MCF 10A (cell line): ENCODE measurements at regions of chr19 and their contacts with region 1.

Region 1: GRCh38 chr19:41883821-41884733 is 1.1 kb downstream of the ARHGEF1 start:
- DNase-seq: peak; percentile 98
- H3K4me3 Mint-ChIP-seq: peak overlapping the region; percentile 77
- H3K27ac Mint-ChIP-seq: peak overlapping the region; percentile 95
- H3K4me1 Mint-ChIP-seq: peaks cover 33% of the 10 kb centered on the region
- H3K27me3 Mint-ChIP-seq: no peaks in the 10 kb centered on the region
- CTCF ChIP-seq: no peak

Region 2: DNA sequence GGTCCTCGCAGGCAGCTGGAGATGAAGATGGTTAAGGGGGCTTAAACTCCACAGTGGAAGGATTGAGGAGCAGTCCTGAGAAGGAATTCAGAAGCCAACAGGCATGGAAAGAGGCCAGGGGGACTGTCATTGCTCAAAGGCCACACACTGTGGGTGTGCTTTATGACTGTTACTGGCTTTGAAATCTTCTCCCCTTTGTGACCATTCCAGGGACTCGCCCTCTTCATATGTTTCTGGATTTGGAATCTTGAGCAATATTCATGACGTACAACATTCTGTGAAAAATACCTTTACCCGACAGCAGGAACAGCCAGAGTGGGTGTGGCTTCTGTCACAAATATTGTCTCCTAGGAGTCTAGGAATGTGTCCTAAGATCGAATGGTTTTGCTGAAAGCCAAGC is 212.6 kb before region 1 on chr19:
- CTCF ChIA-PET with region 1: no interaction called
- POLR2A ChIA-PET with region 1: no interaction called
- intact Hi-C with region 1: no loop called
- DNase-seq: no peak
- H3K4me3 Mint-ChIP-seq: no peak overlapping the region
- H3K27ac Mint-ChIP-seq: no peak overlapping the region
- H3K4me1 Mint-ChIP-seq: no peaks in the 10 kb centered on the region
- H3K27me3 Mint-ChIP-seq: peaks cover 73% of the 10 kb centered on the region
- CTCF ChIP-seq: no peak

Region 3: GRCh38 chr19:41859618-41860418 is 24.3 kb before region 1 on chr19 and contains the start of gene RPS19:
- CTCF ChIA-PET with region 1: no interaction called
- POLR2A ChIA-PET with region 1: interaction called, 125 read pairs
- intact Hi-C with region 1: no loop called
- DNase-seq: peak; percentile 100
- H3K4me3 Mint-ChIP-seq: peak within 1 kb of the TSS; percentile 82
- H3K27ac Mint-ChIP-seq: peak within 1 kb of the TSS; percentile 97
- H3K4me1 Mint-ChIP-seq: peaks cover 20% of the 10 kb centered on the region
- H3K27me3 Mint-ChIP-seq: peaks cover 7% of the 10 kb centered on the region
- CTCF ChIP-seq: peak; percentile 55
- total RNA-seq, gene RPS19: 3,060 and 3,357 TPM in 2 replicates

Region 4: DNA sequence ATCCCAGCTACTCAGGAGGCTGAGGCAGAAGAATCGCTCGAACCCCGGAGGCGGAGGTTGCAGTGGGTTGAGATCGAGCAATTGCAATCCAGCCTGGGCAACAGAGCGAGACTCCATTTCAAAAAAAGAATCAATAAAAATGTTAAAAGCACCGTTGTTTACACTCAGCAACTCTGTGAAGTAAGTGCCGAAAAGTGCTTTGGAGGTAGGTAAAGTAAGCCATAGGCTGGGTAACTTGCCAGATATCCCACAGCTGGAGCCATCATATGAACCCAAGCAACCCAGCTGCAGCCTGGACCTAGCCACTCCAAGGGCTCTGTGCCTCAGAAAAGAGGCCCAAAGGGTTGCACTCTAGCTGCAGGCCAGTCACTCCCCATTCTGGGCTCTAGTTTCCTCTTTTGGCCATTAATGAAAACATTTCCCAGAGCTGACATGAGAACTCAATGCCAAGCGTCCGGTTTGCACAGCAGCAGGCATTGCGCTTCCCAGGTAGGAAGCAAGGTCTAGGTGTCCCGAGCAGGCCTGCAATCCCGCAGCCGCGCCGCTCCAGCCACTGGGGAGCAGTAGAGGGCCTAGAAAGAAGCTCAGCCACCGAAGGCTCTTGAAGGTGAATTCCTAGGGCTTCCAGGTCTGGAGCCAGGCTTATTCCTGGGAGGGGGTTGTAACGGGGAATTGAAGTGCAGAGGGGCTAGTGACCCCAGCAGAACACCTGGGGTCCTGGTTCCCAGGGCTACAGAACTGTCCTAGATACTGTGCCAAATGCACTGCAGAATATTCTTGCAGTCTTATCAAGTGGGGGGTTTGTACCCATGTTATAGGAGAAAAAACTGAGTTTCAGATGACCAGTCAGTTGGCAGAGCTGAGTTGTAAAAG is 11.1 kb before region 1 on chr19:
- CTCF ChIA-PET with region 1: interaction called, 6 read pairs
- POLR2A ChIA-PET with region 1: interaction called, 46 read pairs
- intact Hi-C with region 1: no loop called
- DNase-seq: peak; percentile 87
- H3K4me3 Mint-ChIP-seq: peak overlapping the region; percentile 28
- H3K27ac Mint-ChIP-seq: no peak overlapping the region
- H3K4me1 Mint-ChIP-seq: peaks cover 3% of the 10 kb centered on the region
- H3K27me3 Mint-ChIP-seq: no peaks in the 10 kb centered on the region
- CTCF ChIP-seq: peak; percentile 51

Region 5: DNA sequence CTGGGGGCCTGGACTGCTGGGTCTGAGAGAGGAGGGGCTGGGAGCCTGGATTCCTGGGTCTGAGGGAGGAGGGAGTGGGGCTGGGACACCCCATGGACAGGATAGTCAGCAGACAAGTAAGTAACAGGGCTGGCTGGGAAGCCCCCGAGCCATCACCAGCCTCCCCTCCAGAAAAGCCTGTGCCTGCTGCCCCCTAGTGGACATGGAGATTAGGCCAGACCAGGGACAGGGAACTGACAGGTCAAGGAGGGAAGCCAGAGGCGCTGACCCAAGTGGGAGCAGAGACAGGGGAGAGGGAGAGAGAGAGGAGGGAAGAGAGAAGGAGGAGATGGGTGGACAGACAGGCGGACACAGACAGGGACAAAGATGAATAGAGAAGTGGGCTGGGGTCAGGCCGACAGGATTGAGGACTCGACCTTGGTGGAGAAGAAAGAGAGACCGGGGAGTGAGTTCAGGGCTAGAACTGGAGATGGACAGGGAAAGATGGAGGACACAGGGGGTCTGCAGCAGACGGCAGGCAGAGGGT is 50.8 kb after region 1 on chr19:
- CTCF ChIA-PET with region 1: interaction called, 4 read pairs
- POLR2A ChIA-PET with region 1: no interaction called
- intact Hi-C with region 1: loop called (anchors 1 kb)
- DNase-seq: peak; percentile 80
- H3K4me3 Mint-ChIP-seq: no peak overlapping the region
- H3K27ac Mint-ChIP-seq: no peak overlapping the region
- H3K4me1 Mint-ChIP-seq: peaks cover 20% of the 10 kb centered on the region
- H3K27me3 Mint-ChIP-seq: peaks cover 52% of the 10 kb centered on the region
- CTCF ChIP-seq: peak; percentile 80

Region 6: GRCh38 chr19:41951686-41952172 is 67.7 kb after region 1 on chr19:
- CTCF ChIA-PET with region 1: interaction called, 11 read pairs
- POLR2A ChIA-PET with region 1: interaction called, 5 read pairs
- intact Hi-C with region 1: no loop called
- DNase-seq: peak; percentile 79
- H3K4me3 Mint-ChIP-seq: no peak overlapping the region
- H3K27ac Mint-ChIP-seq: no peak overlapping the region
- H3K4me1 Mint-ChIP-seq: peaks cover 4% of the 10 kb centered on the region
- H3K27me3 Mint-ChIP-seq: no peaks in the 10 kb centered on the region
- CTCF ChIP-seq: peak; percentile 98

Region 7: DNA sequence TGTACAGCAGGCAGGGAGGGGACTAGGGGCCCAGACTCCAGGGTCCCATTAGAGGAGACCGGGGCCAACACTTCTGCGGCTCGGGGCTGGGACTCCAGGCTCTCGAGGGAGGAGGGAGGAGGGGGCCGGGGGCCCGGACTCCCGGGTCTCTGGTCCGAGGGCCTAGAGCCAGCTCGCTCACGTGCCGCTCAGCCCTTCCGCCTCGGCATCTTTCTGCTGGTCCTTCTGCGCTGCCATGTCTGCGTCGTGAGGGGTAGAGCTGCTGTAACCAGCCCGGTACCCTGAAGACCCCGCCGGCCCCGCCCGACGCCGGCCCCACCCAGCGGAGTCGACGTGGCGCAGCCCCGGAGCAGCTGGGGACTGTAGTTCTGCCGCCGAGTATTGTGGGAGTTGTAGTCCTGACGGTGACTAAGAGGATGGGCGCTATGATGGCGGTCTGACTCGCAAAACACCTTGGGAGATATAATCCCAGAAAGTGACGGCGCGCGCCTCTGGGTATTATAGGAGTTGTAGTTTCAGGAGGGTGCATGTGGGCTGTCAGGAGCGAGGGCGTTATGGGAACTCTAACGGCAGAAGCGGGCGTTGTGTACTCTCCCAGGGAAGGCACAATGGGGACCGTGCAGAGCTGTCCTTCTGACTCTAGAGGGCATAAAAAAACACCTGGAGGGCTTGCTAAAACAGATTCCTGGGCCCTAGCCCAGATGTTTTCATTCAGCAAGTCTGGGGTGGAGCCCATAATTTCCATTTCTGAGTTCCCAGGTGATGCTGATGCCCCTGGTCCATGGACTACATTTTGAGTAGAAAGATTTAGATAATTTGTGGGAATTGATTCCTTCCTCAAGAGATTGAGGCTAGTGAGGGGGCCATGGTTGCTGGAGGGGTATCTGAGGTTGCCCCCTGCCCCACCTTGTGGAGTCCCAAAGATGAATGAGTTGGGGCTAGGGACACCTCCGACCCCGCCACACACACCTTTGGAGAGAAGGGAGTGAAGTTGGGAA is 75.3 kb after region 1 on chr19 and contains the start of gene RABAC1:
- CTCF ChIA-PET with region 1: no interaction called
- POLR2A ChIA-PET with region 1: interaction called, 21 read pairs
- intact Hi-C with region 1: loop called (anchors 2 kb)
- DNase-seq: peak; percentile 89
- H3K4me3 Mint-ChIP-seq: peak within 1 kb of the TSS; percentile 74
- H3K27ac Mint-ChIP-seq: peak within 1 kb of the TSS; percentile 78
- H3K4me1 Mint-ChIP-seq: peaks cover 19% of the 10 kb centered on the region
- H3K27me3 Mint-ChIP-seq: no peaks in the 10 kb centered on the region
- CTCF ChIP-seq: peak; percentile 19
- total RNA-seq, gene RABAC1: 75.4 and 104 TPM in 2 replicates

Region 8: GRCh38 chr19:42075616-42076379 is 191.7 kb after region 1 on chr19 and contains the start of gene ZNF574:
- CTCF ChIA-PET with region 1: no interaction called
- POLR2A ChIA-PET with region 1: interaction called, 11 read pairs
- intact Hi-C with region 1: no loop called
- DNase-seq: peak; percentile 100
- H3K4me3 Mint-ChIP-seq: peak within 1 kb of the TSS; percentile 100
- H3K27ac Mint-ChIP-seq: peak within 1 kb of the TSS; percentile 100
- H3K4me1 Mint-ChIP-seq: peaks cover 29% of the 10 kb centered on the region
- H3K27me3 Mint-ChIP-seq: no peaks in the 10 kb centered on the region
- CTCF ChIP-seq: no peak
- total RNA-seq, gene ZNF574: 12.2 and 13.5 TPM in 2 replicates